ENCODE measurements at regions of chr20 and their contacts with region 1.

Region 1: GRCh38 chr20:58634521-58635278 is 16.4 kb upstream of the STX16 start:
- DNase-seq: peak in 1 of 2 experiments; percentile 36
- H3K4me3 ChIP-seq: no peak overlapping the region
- H3K4me3 Mint-ChIP-seq: no peak overlapping the region
- H3K27ac Mint-ChIP-seq: no peak overlapping the region
- H3K4me1 ChIP-seq: no peaks in the 10 kb centered on the region
- H3K4me1 Mint-ChIP-seq: no peaks in the 10 kb centered on the region
- H3K27me3 ChIP-seq: no peaks in the 10 kb centered on the region; the same call in none of the 2 replicates
- H3K27me3 Mint-ChIP-seq: peaks cover 5% of the 10 kb centered on the region
- CTCF ChIP-seq: no peak

Region 2: GRCh38 chr20:58481481-58482021 is 153.1 kb before region 1 on chr20:
- CTCF ChIA-PET with region 1: interaction called, 3 read pairs
- POLR2A ChIA-PET with region 1: no interaction called
- intact Hi-C with region 1: loop called (anchors 5 kb)
- DNase-seq: peak; percentile 60 to 74
- H3K4me3 ChIP-seq: no peak overlapping the region
- H3K4me3 Mint-ChIP-seq: no peak overlapping the region
- H3K27ac Mint-ChIP-seq: no peak overlapping the region
- H3K4me1 ChIP-seq: no peaks in the 10 kb centered on the region
- H3K4me1 Mint-ChIP-seq: no peaks in the 10 kb centered on the region
- H3K27me3 ChIP-seq: no peaks in the 10 kb centered on the region
- H3K27me3 Mint-ChIP-seq: peaks cover 3% of the 10 kb centered on the region
- CTCF ChIP-seq: peak; percentile 26 to 78

Region 3: DNA sequence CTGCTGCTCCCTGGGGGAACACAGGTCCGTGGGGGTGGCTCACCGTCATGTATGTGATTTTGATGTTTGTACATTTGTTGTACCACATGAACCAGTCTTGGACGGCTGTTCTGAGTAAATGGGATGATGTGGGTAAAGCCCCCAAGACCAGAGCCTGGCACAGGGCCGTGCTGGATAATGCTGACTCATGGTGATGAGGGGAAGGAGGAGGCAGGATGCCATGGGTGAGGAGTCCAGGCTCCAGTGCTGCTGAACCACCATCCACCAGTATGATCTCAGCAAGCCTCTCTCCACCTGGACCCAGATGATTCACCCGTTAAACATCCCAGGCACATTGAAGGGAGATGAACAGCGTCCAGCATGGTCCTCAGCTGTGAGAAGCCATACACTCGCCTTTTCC is 109.9 kb before region 1 on chr20:
- CTCF ChIA-PET with region 1: no interaction called
- POLR2A ChIA-PET with region 1: no interaction called
- intact Hi-C with region 1: no loop called
- DNase-seq: peak in 1 of 2 experiments; percentile 35
- H3K4me3 ChIP-seq: no peak overlapping the region
- H3K4me3 Mint-ChIP-seq: no peak overlapping the region
- H3K27ac Mint-ChIP-seq: no peak overlapping the region
- H3K4me1 ChIP-seq: no peaks in the 10 kb centered on the region
- H3K4me1 Mint-ChIP-seq: no peaks in the 10 kb centered on the region
- H3K27me3 ChIP-seq: peaks cover 2% of the 10 kb centered on the region; the same call in 1 of the 2 replicates
- H3K27me3 Mint-ChIP-seq: peaks cover 2% of the 10 kb centered on the region
- CTCF ChIP-seq: no peak

Region 4: DNA sequence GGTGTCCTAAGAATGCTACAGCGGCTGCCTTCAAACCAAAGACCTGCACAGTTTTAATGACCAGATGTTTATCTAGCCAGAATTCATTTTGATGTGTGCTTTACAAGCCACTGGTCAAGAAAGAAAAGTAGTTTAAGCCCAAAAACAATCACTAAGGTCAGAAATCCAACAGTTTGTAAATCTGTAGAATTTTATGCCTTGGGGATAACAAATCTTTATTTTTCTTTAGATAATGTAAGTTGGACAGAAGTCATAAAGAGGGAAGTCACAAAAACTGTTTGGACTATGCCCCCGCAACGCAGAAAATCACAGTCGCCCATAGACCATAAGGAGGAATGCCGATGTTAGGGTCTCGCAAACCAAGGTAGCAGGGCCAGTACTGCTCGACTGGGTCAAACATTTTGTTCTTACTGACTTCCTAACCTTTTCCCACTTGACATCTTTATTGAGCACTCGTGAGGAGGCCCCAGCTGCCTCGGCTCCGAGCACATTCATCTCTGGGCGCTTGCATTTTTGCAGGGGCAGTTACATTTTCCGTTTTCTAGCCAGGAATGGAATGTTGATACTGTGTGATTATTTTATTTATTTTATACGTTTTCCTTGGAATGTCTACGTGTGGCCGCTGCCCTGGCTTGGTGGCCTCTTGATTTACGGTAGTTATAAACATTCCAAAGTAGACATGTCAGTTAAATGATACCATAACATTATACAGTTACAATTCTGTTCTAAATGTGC is 62.8 kb before region 1 on chr20:
- CTCF ChIA-PET with region 1: no interaction called
- POLR2A ChIA-PET with region 1: no interaction called
- intact Hi-C with region 1: loop called (anchors 5 kb)
- DNase-seq: peak; percentile 73 to 88
- H3K4me3 ChIP-seq: peak overlapping the region; percentile 10; the same call in 1 of the 2 replicates
- H3K4me3 Mint-ChIP-seq: peak overlapping the region; percentile 63
- H3K27ac Mint-ChIP-seq: peak overlapping the region; percentile 90
- H3K4me1 ChIP-seq: peaks cover 44% of the 10 kb centered on the region
- H3K4me1 Mint-ChIP-seq: peaks cover 18% of the 10 kb centered on the region
- H3K27me3 ChIP-seq: no peaks in the 10 kb centered on the region
- H3K27me3 Mint-ChIP-seq: no peaks in the 10 kb centered on the region
- CTCF ChIP-seq: no peak

Region 5: DNA sequence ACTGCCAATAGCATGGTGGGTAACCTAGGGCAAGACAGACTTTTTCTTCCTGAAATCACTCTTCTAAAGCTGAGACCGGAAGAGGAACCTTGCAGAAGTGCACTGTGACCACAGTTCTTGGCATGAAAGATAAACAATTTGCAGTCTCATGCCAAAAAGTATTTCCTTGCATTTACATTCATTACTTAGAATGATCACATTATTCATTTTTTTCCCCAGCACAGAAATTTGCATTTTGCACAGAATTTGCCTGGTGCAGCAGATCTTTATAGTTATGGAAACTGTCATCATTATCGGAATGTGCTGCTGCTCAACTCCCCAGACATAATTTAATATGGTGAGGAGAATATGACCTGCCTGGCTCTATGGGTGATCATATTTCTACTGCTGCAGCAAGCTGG is 623.5 kb after region 1 on chr20:
- CTCF ChIA-PET with region 1: no interaction called
- POLR2A ChIA-PET with region 1: no interaction called
- intact Hi-C with region 1: no loop called
- DNase-seq: no peak
- H3K4me3 ChIP-seq: no peak overlapping the region
- H3K4me3 Mint-ChIP-seq: no peak overlapping the region
- H3K27ac Mint-ChIP-seq: no peak overlapping the region
- H3K4me1 ChIP-seq: no peaks in the 10 kb centered on the region
- H3K4me1 Mint-ChIP-seq: no peaks in the 10 kb centered on the region
- H3K27me3 ChIP-seq: no peaks in the 10 kb centered on the region; the same call in 1 of the 2 replicates
- H3K27me3 Mint-ChIP-seq: peaks cover 7% of the 10 kb centered on the region
- CTCF ChIP-seq: no peak